ENCODE measurements at regions of chr22 and their contacts with region 1.

Region 1: GRCh38 chr22:35749808-35750207 is 32.1 kb downstream of the APOL5 start:
- DNase-seq: no peak
- H3K4me3 ChIP-seq: no peak overlapping the region
- H3K27ac ChIP-seq: no peak overlapping the region
- H3K4me1 ChIP-seq: peaks cover 0 to 32% (median 19%) of the 10 kb centered on the region in 4 donors
- H3K27me3 ChIP-seq: no peaks in the 10 kb centered on the region
- CTCF ChIP-seq: no peak
- EP300 ChIP-seq: no peak
- POLR2A ChIP-seq: no peak

Region 2: DNA sequence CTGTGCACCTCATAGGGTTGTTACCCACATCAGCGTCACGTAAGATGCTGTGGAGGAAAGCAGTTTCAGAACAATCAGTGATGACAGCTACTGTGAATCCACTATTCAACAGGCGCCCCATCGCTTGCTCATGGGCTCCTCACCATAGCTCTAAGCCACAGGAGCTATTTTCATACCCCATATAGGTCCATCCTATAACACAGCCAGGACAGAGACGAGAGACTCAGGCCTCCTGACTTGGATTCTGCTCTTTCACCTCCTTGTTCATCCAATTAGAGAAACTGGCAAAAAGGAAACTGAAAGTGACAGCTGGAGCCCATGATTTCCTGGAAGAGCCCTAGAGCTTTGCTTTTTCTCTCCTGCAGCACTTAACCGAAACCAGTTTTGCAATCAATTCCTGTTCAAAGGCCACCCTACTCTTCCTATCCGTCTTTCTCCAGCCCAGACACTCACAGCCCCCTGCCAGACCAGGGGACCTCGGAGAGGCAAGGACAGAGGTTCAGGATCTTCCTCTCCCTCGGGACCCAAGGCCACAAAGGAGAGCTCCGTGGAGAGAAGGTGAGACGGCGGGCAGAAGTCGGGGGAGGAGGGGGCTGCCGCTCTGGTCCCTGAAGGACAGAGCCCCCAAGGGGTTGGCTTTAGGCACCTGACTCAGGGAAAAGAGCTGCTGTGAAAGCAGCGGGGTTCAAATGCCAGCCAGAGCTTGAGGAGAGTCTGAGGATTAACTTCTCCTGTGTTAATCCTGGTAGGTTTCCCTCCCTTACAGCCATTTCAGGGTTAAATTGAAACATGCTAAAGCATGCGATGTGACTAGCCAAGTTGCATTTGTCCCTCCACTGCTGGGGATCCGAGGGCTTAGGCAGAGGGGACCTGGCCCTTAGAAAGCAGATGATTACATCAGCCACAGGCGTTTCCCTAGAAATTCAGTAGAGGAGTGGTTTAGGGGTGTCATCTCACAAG is 101.5 kb before region 1 on chr22 and contains the start of gene APOL6:
- intact Hi-C with region 1: loop called (anchors 5 kb)
- DNase-seq: peak; percentile 74
- H3K4me3 ChIP-seq: peak within 1 kb of the TSS; percentile 58 to 74 (median 67)
- H3K27ac ChIP-seq: peak within 1 kb of the TSS; percentile 85 to 93 (median 91)
- H3K4me1 ChIP-seq: peaks cover 0 to 44% (median 34%) of the 10 kb centered on the region in 4 donors
- H3K27me3 ChIP-seq: no peaks in the 10 kb centered on the region
- CTCF ChIP-seq: no peak
- EP300 ChIP-seq: peak in 1 of 4 donors; percentile 13
- POLR2A ChIP-seq: peak; percentile 8 to 35
- total RNA-seq, gene APOL6: 15.8 to 28.2 (median 17.0) TPM

Region 3: GRCh38 chr22:35697142-35697541 is 52.7 kb before region 1 on chr22:
- intact Hi-C with region 1: no loop called
- DNase-seq: no peak
- H3K4me3 ChIP-seq: no peak overlapping the region
- H3K27ac ChIP-seq: no peak overlapping the region
- H3K4me1 ChIP-seq: no peaks in the 10 kb centered on the region
- H3K27me3 ChIP-seq: no peaks in the 10 kb centered on the region
- CTCF ChIP-seq: no peak
- EP300 ChIP-seq: no peak
- POLR2A ChIP-seq: no peak

Region 4: DNA sequence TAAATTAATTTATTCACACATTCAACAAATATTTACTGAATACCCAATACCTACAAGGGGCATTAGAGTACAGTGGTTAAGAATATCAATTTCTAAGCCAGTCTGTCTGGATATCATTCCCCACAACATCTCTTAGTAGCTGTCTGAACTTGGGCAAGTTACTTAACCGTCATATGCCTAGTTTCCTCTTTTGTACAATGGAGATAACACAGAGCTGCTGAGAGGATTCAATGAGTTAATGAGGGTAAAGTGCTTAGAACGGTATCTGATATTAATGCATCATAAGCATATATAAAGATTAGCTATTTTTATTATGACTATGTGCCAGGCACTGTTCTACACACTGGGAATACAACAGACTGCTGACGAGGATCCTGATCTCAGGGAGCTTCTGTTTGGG is 84.3 kb after region 1 on chr22:
- intact Hi-C with region 1: loop called (anchors 5 kb)
- DNase-seq: no peak
- H3K4me3 ChIP-seq: no peak overlapping the region
- H3K27ac ChIP-seq: peak overlapping the region; percentile 80 to 86 (median 84)
- H3K4me1 ChIP-seq: peaks cover 0 to 94% (median 79%) of the 10 kb centered on the region in 4 donors
- H3K27me3 ChIP-seq: no peaks in the 10 kb centered on the region
- CTCF ChIP-seq: no peak
- EP300 ChIP-seq: no peak
- POLR2A ChIP-seq: no peak

Measured in sigmoid colon (tissue), 7 donors.